ENCODE measurements at regions of chrX and their contacts with region 1.

Region 1: GRCh38 chrX:47193475-47194193 is at the start of gene UBA1:
- DNase-seq: peak; percentile 98
- ATAC-seq: peak; percentile 96
- H3K4me3 ChIP-seq: peak within 1 kb of the TSS; percentile 35 to 76
- H3K27ac ChIP-seq: peak within 1 kb of the TSS; percentile 10 to 90
- H3K4me1 ChIP-seq: peaks cover 0 to 3% of the 10 kb centered on the region in 2 donors
- H3K27me3 ChIP-seq: no peaks in the 10 kb centered on the region
- total RNA-seq, gene UBA1: 160 to 167 TPM

Region 2: DNA sequence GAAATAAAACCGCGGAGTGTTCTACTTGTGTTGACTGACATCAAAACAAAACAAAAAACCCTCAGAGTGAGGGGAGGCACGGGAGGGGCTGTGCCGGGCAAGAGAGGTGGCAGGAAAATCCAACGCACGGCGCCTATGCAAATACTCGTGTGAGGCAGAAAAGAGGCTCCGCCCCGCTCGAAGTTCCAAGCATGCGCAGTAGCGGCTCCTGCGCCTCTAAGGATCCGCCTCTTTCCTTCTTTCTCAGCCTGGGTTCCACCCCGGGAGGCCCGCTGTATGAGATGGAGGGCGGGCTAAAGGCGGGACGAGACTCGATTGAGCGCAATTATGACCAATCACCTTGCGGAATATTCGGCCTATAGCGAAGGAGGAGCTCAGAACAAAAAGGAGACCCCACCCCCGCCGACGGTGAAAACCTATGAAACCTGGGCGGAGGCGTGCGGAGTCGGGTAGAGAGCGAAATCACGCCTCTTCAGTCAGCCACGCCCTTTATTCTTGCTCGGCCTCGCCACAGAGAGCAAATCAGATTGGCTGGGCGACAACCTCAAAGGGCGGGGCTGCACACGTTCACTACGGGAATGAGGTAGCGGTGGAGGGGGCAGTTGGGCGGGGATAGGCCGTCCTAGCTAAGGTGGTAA is 24.1 kb after region 1 on chrX:
- intact Hi-C with region 1: loop called in 1 of 2 experiments (anchors 1 kb)
- DNase-seq: peak; percentile 99
- ATAC-seq: peak; percentile 95
- H3K4me3 ChIP-seq: peak overlapping the region; percentile 0 to 69
- H3K27ac ChIP-seq: peak overlapping the region in 1 of 2 donors; percentile 69
- H3K4me1 ChIP-seq: no peaks in the 10 kb centered on the region
- H3K27me3 ChIP-seq: no peaks in the 10 kb centered on the region

Region 3: DNA sequence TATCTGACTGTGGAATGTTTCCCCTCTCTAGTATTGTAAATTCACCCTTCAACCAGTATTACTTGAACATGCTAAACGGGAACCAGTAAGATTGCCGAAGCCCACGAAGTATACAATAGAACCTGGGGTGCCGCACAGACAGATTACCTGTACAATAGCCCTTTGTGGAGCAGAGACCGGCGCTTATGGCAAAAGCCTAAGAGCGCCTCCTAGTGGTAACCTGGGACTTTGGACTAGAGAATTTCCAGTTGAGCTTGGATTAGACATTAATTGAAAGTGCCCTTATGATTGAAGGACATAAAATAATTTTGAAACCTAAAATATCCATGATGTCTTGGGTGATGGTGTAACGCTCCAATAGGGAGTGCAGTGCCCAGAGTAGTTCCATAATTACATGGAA is 190.9 kb after region 1 on chrX:
- intact Hi-C with region 1: loop called (anchors 2 to 5 kb)
- DNase-seq: peak in 1 of 2 donors; percentile 63
- ATAC-seq: peak; percentile 70
- H3K4me3 ChIP-seq: no peak overlapping the region
- H3K27ac ChIP-seq: no peak overlapping the region
- H3K4me1 ChIP-seq: no peaks in the 10 kb centered on the region
- H3K27me3 ChIP-seq: no peaks in the 10 kb centered on the region

Region 4: DNA sequence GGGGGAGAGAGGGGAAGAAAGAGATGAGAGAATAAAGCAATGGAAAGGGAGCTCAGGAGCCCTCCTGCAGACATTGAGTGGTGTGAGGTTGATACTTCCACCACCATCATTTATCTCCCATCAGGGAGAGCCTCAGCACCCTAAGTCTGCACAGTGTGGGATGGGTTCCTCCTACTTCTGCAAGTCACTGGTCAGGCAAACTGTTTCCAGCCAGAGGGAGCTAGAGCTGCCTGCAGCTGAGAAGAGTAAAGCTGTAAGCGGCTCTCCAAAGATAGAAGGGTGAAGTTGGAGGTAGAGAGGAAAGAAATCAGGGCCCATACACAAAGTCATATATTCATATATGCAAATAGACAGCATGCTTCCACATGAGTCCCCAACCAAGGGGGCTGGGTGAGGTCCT is 621.2 kb after region 1 on chrX:
- intact Hi-C with region 1: no loop called
- DNase-seq: no peak
- ATAC-seq: no peak
- H3K4me3 ChIP-seq: no peak overlapping the region
- H3K27ac ChIP-seq: no peak overlapping the region
- H3K4me1 ChIP-seq: no peaks in the 10 kb centered on the region
- H3K27me3 ChIP-seq: no peaks in the 10 kb centered on the region

Measured in aorta (tissue), 5 donors.